Posterior vena cava (tissue), 2 donors: ENCODE measurements at regions of chr2 and their contacts with region 1.

Region 1: DNA sequence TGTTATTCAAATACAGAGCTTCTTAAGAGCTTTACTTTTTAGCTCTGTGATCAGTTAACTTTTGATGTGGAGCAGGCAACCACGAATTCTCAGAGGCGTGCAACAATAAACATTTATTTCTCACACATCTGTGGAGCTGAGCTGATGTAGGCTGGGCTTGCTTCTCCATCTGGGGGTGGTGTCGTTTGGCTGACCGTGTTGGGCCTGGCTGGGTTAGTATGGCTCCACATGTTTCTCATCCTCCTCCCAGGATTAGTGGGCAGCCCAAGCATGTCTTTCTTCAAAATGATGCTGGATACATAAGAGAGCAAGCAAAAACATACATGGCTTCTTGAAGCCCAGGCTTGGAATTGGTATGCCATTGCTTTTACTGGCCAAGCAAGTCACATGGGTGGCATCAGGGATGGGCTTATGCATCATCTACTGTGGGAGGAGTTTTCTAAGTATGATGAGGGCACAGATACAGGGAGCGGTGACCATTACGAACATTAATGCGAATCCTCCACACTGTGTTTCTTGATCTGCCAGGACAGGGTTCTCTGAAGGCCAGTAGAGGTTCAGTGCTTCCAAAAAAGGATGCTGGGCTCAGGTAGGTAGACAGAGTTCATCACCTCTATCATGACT is 157.0 kb upstream of the TNP1 start:
- DNase-seq: no peak

Region 2: GRCh38 chr2:216619411-216620393 is 397.2 kb before region 1 on chr2:
- intact Hi-C with region 1: loop called in 1 of 2 experiments (anchors 10 kb)
- DNase-seq: no peak